PC-9 (cell line): ENCODE measurements at regions of chr19 and their contacts with region 1.

Region 1: GRCh38 chr19:51904331-51905165 is at the start of gene ZNF649:
- DNase-seq: peak; percentile 82 to 85
- H3K4me3 ChIP-seq: peak within 1 kb of the TSS; percentile 81
- H3K27ac ChIP-seq: no peak within 1 kb of the TSS
- H3K4me1 ChIP-seq: peaks cover 7% of the 10 kb centered on the region; the same call in 1 of the 2 replicates
- H3K27me3 ChIP-seq: no peaks in the 10 kb centered on the region
- CTCF ChIP-seq: no peak
- total RNA-seq, gene ZNF649: 8.8 and 9.6 TPM in 2 replicates

Region 2: DNA sequence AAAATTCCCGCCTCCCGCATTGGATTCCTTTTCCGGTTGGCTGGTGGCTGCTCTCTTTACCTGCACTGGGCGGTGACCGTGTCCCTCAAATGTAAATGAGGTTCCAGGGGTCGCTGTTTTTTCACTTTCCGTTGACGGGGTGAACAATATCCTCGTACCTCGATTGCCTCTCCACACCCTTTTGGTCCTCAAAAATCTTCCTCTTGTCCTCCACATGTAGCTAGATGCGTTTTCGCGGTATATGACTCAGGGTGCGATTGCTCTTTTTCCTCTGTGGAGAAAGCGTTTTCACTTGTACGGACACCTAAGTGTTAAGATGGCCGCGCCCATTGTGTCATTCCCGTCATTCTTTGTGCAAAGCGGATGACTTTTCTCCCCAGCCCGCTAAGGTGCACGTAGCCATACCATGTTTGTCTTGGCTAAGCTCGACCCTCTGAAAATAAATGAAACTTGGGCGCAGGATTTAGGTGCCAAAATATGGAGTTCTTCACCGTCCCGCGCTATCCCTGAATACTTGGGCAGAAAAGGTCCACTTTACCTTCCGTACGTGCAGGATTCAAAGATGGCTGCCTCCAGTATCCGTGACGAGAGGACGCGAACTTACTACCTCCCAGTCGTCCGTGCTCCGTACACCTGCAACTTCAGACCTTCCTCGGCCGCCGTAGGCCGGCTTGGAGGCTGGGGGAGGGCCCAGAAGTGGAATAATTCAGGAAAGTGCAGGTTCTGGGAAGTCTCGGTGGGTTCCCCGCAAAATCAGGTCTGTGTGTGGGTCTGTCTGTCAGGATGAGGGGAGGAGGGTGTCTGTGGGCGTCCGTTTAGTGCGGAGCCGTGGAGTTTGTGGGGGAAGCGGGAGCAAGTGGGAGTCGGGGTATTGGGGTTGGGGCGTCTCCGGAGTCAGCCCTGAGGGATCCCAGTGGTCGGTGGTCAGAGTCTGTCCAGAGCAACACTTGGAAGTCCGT is 22.5 kb after region 1 on chr19 and contains the start of gene ZNF613:
- CTCF ChIA-PET with region 1: no interaction called
- POLR2A ChIA-PET with region 1: no interaction called
- intact Hi-C with region 1: loop called (anchors 1 kb)
- DNase-seq: peak; percentile 89 to 91
- H3K4me3 ChIP-seq: peak within 1 kb of the TSS; percentile 70
- H3K27ac ChIP-seq: peak within 1 kb of the TSS; percentile 69
- H3K4me1 ChIP-seq: peaks cover 5% of the 10 kb centered on the region
- H3K27me3 ChIP-seq: no peaks in the 10 kb centered on the region
- CTCF ChIP-seq: peak; percentile 55; the same call in 1 of the 2 replicates
- total RNA-seq, gene ZNF613: 4.8 and 5.6 TPM in 2 replicates

Region 3: GRCh38 chr19:52028027-52028779 is 123.7 kb after region 1 on chr19 and contains the start of gene ZNF614:
- CTCF ChIA-PET with region 1: no interaction called
- POLR2A ChIA-PET with region 1: no interaction called
- intact Hi-C with region 1: loop called (anchors 5 kb)
- DNase-seq: peak; percentile 75 to 85
- H3K4me3 ChIP-seq: peak within 1 kb of the TSS; percentile 79
- H3K27ac ChIP-seq: peak within 1 kb of the TSS; percentile 69
- H3K4me1 ChIP-seq: peaks cover 7% of the 10 kb centered on the region; the same call in 1 of the 2 replicates
- H3K27me3 ChIP-seq: no peaks in the 10 kb centered on the region
- CTCF ChIP-seq: no peak
- total RNA-seq, gene ZNF614: 8.6 and 9.9 TPM in 2 replicates